ENCODE measurements at regions of chr4 and their contacts with region 1.

Region 1: GRCh38 chr4:159175085-159175988 is 72.5 kb downstream of the RAPGEF2 start:
- DNase-seq: peak; percentile 44 to 50
- ATAC-seq: peak; percentile 87 to 90
- H3K4me3 ChIP-seq: peak overlapping the region in 2 of 4 donors; percentile 10 to 12
- H3K27ac ChIP-seq: peak overlapping the region; percentile 35 to 72 (median 67)
- H3K4me1 ChIP-seq: peaks cover 47 to 85% of the 10 kb centered on the region in 2 donors
- H3K27me3 ChIP-seq: no peaks in the 10 kb centered on the region
- CTCF ChIP-seq: peak; percentile 78 to 88 (median 86)
- POLR2A ChIP-seq: no peak

Region 2: GRCh38 chr4:158722917-158723793 is 452.2 kb before region 1 on chr4 and contains the start of gene PPID:
- in situ Hi-C with region 1: loop called in 1 of 4 experiments (anchors 25 kb)
- intact Hi-C with region 1: no loop called
- DNase-seq: peak; percentile 68 to 81
- ATAC-seq: peak; percentile 92 to 95
- H3K4me3 ChIP-seq: peak within 1 kb of the TSS; percentile 72 to 95 (median 94)
- H3K27ac ChIP-seq: peak within 1 kb of the TSS; percentile 90 to 96 (median 92)
- H3K4me1 ChIP-seq: peaks cover 17 to 30% of the 10 kb centered on the region in 2 donors
- H3K27me3 ChIP-seq: no peaks in the 10 kb centered on the region
- CTCF ChIP-seq: no peak
- POLR2A ChIP-seq: peak; percentile 87
- total RNA-seq, gene PPID: 30.1 to 81.8 (median 40.6) TPM

Region 3: GRCh38 chr4:158729716-158730559 is 445.4 kb before region 1 on chr4:
- in situ Hi-C with region 1: loop called in 1 of 4 experiments (anchors 10 kb)
- intact Hi-C with region 1: loop called (anchors 1 kb)
- DNase-seq: peak; percentile 10 to 55
- ATAC-seq: peak; percentile 87 to 97
- H3K4me3 ChIP-seq: no peak overlapping the region
- H3K27ac ChIP-seq: no peak overlapping the region
- H3K4me1 ChIP-seq: no peaks in the 10 kb centered on the region
- H3K27me3 ChIP-seq: no peaks in the 10 kb centered on the region
- CTCF ChIP-seq: peak; percentile 82 to 95 (median 91)
- POLR2A ChIP-seq: no peak

Region 4: GRCh38 chr4:158856852-158857251 is 318.5 kb before region 1 on chr4:
- in situ Hi-C with region 1: loop called in 1 of 4 experiments (anchors 10 kb)
- intact Hi-C with region 1: loop called (anchors 2 kb)
- DNase-seq: no peak
- ATAC-seq: peak; percentile 65 to 73
- H3K4me3 ChIP-seq: no peak overlapping the region
- H3K27ac ChIP-seq: no peak overlapping the region
- H3K4me1 ChIP-seq: no peaks in the 10 kb centered on the region
- H3K27me3 ChIP-seq: no peaks in the 10 kb centered on the region
- CTCF ChIP-seq: peak in 4 of 5 experiments; percentile 26 to 51 (median 36)
- POLR2A ChIP-seq: no peak

Region 5: GRCh38 chr4:158895797-158896576 is 279.4 kb before region 1 on chr4:
- in situ Hi-C with region 1: no loop called
- intact Hi-C with region 1: loop called (anchors 2 kb)
- DNase-seq: no peak
- ATAC-seq: peak in 1 of 2 donors; percentile 51
- H3K4me3 ChIP-seq: no peak overlapping the region
- H3K27ac ChIP-seq: peak overlapping the region in 3 of 4 donors; percentile 4 to 39 (median 8)
- H3K4me1 ChIP-seq: peaks cover 9 to 11% of the 10 kb centered on the region in 2 donors
- H3K27me3 ChIP-seq: no peaks in the 10 kb centered on the region
- CTCF ChIP-seq: peak in 1 of 5 experiments; percentile 16
- POLR2A ChIP-seq: no peak

Region 6: GRCh38 chr4:159016593-159017024 is 158.7 kb before region 1 on chr4:
- in situ Hi-C with region 1: no loop called
- intact Hi-C with region 1: loop called (anchors 10 kb)
- DNase-seq: no peak
- ATAC-seq: no peak
- H3K4me3 ChIP-seq: peak overlapping the region in 1 of 4 donors; percentile 21
- H3K27ac ChIP-seq: no peak overlapping the region
- H3K4me1 ChIP-seq: no peaks in the 10 kb centered on the region
- H3K27me3 ChIP-seq: no peaks in the 10 kb centered on the region
- CTCF ChIP-seq: no peak
- POLR2A ChIP-seq: no peak

Region 7: GRCh38 chr4:159102622-159103383 is 72.5 kb before region 1 on chr4 and contains the start of gene RAPGEF2:
- in situ Hi-C with region 1: no loop called
- intact Hi-C with region 1: loop called (anchors 1 kb)
- DNase-seq: peak; percentile 90 to 92
- ATAC-seq: peak; percentile 93
- H3K4me3 ChIP-seq: peak within 1 kb of the TSS; percentile 67 to 97 (median 93)
- H3K27ac ChIP-seq: peak within 1 kb of the TSS; percentile 93 to 96 (median 95)
- H3K4me1 ChIP-seq: peaks cover 35 to 43% of the 10 kb centered on the region in 2 donors
- H3K27me3 ChIP-seq: no peaks in the 10 kb centered on the region
- CTCF ChIP-seq: peak in 1 of 5 experiments; percentile 10
- POLR2A ChIP-seq: peak; percentile 95 to 98
- total RNA-seq, gene RAPGEF2: 32.9 to 42.3 (median 38.7) TPM